AG04450 (cell line): ENCODE measurements at regions of chr5 and their contacts with region 1.

Region 1: GRCh38 chr5:174418928-174419796 is 305.2 kb upstream of the MSX2 start:
- DNase-seq: peak; percentile 90
- H3K4me3 ChIP-seq: peak overlapping the region; percentile 54
- H3K27ac ChIP-seq: no peak overlapping the region
- H3K27me3 ChIP-seq: no peaks in the 10 kb centered on the region
- CTCF ChIP-seq: peak; percentile 99

Region 2: DNA sequence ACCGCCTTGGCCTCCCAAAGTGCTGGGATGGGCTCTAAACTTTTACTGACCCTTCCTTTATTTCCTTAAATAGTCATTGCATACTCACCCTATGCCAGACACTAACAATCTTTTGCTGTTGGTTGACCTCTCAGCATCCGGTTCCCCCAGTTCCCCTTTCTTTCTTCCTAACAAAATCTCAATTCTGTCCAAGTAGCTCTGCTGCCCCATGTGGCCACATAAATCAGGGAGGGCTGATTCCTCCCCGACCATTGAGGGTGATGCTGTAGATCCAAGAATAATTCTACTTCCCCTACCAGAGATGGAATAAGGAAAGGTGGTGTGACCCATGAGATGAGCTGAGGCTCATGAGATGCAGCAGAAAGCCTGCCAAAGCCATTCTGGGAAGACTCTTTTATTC is 10.1 kb before region 1 on chr5:
- CTCF ChIA-PET with region 1: interaction called, 27 read pairs
- POLR2A ChIA-PET with region 1: no interaction called
- DNase-seq: no peak
- H3K4me3 ChIP-seq: no peak overlapping the region
- H3K27ac ChIP-seq: no peak overlapping the region
- H3K27me3 ChIP-seq: peaks cover 2% of the 10 kb centered on the region
- CTCF ChIP-seq: no peak

Region 3: DNA sequence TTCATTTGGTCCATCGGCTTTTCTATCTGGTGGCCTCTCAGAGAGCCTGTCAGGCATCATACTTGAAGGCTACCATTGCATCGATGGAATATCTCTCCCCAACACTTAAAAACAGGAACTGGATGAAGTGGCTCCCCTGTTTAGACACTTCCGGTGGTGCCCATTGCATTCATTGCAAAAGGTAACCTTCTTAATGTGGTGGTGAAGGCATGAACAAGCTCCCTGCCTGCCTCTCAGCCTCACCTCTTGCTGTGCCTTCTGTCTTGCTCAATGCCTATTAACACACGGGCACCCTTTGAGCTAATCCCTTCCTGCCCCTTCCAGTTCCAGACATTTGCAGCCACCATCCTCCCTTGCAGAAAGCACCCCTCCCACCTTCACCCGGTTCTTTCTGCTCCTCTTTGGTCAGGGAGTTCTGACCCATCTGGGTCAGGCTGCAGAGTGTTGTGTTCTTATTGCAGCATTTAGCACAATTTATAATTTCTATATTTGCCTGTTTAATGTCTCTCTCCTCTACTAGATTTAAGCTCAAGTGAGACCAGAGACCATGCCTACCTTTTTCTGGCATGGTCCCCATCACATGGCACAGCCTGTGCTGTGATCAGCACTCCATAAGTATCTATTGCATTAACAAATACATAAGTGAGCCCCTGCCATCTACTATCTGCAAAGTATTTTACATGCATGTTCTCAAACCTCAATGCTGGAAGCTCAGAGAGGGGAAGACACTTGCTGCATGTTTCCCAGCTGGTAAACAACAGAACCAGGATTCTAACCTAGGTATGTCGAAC is 72.3 kb after region 1 on chr5:
- CTCF ChIA-PET with region 1: no interaction called
- POLR2A ChIA-PET with region 1: no interaction called
- DNase-seq: no peak
- H3K4me3 ChIP-seq: no peak overlapping the region
- H3K27ac ChIP-seq: no peak overlapping the region
- H3K27me3 ChIP-seq: no peaks in the 10 kb centered on the region
- CTCF ChIP-seq: no peak

Region 4: DNA sequence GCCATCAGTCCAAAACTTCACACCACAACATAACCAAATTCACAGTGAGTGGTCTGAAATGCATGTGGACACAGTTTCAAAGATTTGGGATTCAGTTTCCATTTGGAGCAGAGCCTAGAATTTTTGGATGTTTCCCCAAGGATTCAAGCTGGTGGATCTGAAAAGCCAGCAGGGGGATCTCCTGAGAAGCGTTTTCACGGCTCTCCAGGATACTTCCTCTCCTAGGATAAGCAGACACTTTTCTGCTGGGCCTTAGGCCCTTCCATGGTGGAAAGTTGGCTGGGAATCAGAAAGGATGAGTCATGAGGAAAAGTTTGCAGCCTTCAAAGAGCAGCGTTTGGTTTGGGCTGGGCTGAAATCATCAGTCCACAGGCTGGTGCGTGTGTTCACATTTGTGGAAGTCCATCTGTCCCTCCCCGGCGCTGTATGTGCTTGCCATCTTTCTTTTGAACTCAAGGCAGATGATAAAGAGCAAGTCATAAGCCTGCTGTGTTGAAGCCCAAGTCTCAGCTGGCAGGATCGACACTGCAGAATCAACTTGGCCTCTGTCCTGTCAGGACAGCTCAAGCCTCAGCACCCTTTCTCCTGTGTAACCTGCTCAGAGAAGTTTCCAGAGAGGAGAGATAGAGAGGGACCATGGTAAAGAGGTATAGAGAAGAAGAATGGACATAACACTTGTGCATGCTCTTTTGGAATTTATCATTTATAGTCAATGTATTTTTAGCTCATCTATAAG is 152.7 kb after region 1 on chr5:
- CTCF ChIA-PET with region 1: interaction called, 15 read pairs
- POLR2A ChIA-PET with region 1: no interaction called
- DNase-seq: peak; percentile 96
- H3K4me3 ChIP-seq: no peak overlapping the region
- H3K27ac ChIP-seq: peak overlapping the region; percentile 62
- H3K27me3 ChIP-seq: no peaks in the 10 kb centered on the region
- CTCF ChIP-seq: peak; percentile 72

Region 5: GRCh38 chr5:174724491-174725260 is 305.5 kb after region 1 on chr5 and contains the start of gene MSX2:
- CTCF ChIA-PET with region 1: interaction called, 32 read pairs
- POLR2A ChIA-PET with region 1: interaction called, 8 read pairs
- DNase-seq: peak; percentile 64
- H3K4me3 ChIP-seq: peak within 1 kb of the TSS; percentile 69
- H3K27ac ChIP-seq: peak within 1 kb of the TSS; percentile 11
- H3K27me3 ChIP-seq: peaks cover 44% of the 10 kb centered on the region
- CTCF ChIP-seq: no peak
- polyA plus RNA-seq, gene MSX2: 7.2 and 9.5 TPM in 2 replicates

Region 6: DNA sequence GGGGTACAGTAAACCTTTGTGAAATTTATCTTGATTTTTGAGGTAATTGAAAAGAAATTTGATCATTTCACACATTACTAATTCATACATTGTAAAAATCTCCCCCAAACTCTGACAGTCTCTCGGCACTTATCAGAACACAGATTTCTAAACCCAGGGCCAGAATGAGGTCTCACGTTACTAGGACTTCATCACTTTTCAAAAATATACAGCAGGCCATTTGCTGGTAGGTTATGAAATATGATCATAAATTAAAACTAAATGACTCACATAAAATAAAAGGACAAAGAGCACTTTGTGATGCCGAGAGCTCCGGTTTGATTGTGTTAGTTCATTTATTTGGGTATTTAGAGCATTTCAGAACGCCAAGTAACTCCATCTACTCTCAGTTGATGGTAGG is 322.2 kb after region 1 on chr5:
- CTCF ChIA-PET with region 1: interaction called, 47 read pairs
- POLR2A ChIA-PET with region 1: no interaction called
- DNase-seq: no peak
- H3K4me3 ChIP-seq: no peak overlapping the region
- H3K27ac ChIP-seq: no peak overlapping the region
- H3K27me3 ChIP-seq: peaks cover 16% of the 10 kb centered on the region
- CTCF ChIP-seq: no peak

Region 7: DNA sequence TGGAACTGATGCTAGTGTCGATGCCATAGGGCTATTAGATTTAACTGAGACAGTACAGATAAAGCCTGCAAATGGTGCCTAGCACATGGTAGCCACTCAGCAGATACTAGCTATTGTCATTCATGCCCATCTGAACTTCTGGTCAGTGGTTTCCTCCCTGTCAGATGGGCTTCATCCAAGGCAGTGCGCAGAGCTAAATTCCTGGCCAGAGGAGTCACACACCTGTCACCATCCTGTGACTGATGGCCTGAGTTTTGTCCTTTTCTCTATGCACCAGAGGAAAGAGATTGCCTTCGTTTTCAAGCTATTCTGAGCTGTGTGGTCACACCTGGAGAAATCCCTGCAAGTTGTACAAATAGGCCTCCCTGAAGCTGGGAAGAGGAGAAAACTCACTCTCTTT is 339.9 kb after region 1 on chr5:
- CTCF ChIA-PET with region 1: interaction called, 75 read pairs
- POLR2A ChIA-PET with region 1: no interaction called
- DNase-seq: no peak
- H3K4me3 ChIP-seq: no peak overlapping the region
- H3K27ac ChIP-seq: no peak overlapping the region
- H3K27me3 ChIP-seq: peaks cover 7% of the 10 kb centered on the region
- CTCF ChIP-seq: no peak

Region 8: GRCh38 chr5:174935854-174936474 is 516.8 kb after region 1 on chr5:
- CTCF ChIA-PET with region 1: interaction called, 18 read pairs
- POLR2A ChIA-PET with region 1: no interaction called
- DNase-seq: peak; percentile 13
- H3K4me3 ChIP-seq: no peak overlapping the region
- H3K27ac ChIP-seq: no peak overlapping the region
- H3K27me3 ChIP-seq: no peaks in the 10 kb centered on the region
- CTCF ChIP-seq: peak; percentile 94